GM12878 (cell line): ENCODE measurements at regions of chr15 and their contacts with region 1.

Region 1: GRCh38 chr15:74906446-74907162 is at the start of gene FAM219B:
- DNase-seq: peak; percentile 47
- ATAC-seq: peak; percentile 98
- H3K4me3 ChIP-seq: peak within 1 kb of the TSS; percentile 97
- H3K27ac ChIP-seq: peak within 1 kb of the TSS; percentile 76
- H3K4me1 ChIP-seq: peaks cover 6% of the 10 kb centered on the region
- H3K27me3 ChIP-seq: no peaks in the 10 kb centered on the region
- CTCF ChIP-seq: 0 out of 6 replicates have a peak, but pooled peaks of 1 of the 3 experiments have one; percentile 1
- EP300 ChIP-seq: no peak
- POLR2A ChIP-seq: peak; percentile 82
- RAD21 ChIP-seq: no peak
- polyA plus RNA-seq, gene FAM219B: 7.6 to 8.9 TPM

Region 2: DNA sequence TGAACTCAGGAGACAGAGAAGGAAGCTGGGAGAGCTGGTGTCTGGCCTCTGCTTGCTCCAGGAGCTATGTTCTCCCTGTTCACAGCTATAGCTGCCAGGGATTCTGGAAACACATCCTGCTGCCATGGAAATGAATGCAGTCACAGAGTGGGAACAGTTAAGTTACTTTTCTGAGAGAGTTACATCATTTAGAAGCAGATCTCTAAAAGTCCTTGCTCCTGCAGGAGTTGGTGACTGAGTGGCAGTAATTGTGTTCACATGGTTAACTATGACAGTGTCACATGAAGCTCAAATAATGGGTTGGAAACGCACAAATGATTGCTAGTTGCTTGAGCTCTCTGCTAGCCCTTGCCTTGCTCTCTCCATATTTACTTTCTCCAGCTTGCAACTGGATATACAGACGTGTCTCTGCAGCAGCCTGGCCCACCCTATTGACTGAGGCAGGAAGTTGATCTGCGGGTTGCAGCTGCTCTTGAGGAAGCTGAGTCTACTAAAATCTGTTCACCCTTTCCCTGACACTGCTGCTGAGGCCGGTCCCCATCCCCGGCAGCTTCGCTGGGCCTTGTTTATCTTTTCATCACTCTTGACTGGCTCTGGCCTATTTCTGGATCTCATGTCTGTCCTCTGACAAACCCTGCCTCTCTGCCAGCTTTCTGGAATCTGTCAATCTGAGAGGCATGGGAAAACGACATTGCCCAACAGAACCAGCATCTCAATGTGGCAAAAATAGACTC is 749.8 kb before region 1 on chr15:
- CTCF ChIA-PET with region 1: no interaction called
- POLR2A ChIA-PET with region 1: no interaction called
- RAD21 ChIA-PET with region 1: no interaction called
- SMC1A ChIA-PET with region 1: no interaction called
- in situ Hi-C with region 1: no loop called
- intact Hi-C with region 1: no loop called
- DNase-seq: no peak
- ATAC-seq: no peak
- H3K4me3 ChIP-seq: no peak overlapping the region
- H3K27ac ChIP-seq: peak overlapping the region; percentile 37; the same call in 1 of the 2 replicates
- H3K4me1 ChIP-seq: peaks cover 33% of the 10 kb centered on the region
- H3K27me3 ChIP-seq: no peaks in the 10 kb centered on the region
- CTCF ChIP-seq: no peak
- EP300 ChIP-seq: no peak
- POLR2A ChIP-seq: no peak
- RAD21 ChIP-seq: no peak

Region 3: GRCh38 chr15:74768771-74769342 is 137.7 kb before region 1 on chr15:
- CTCF ChIA-PET with region 1: interaction called, 119 read pairs
- POLR2A ChIA-PET with region 1: interaction called, 7 read pairs
- RAD21 ChIA-PET with region 1: interaction called, 46 read pairs
- SMC1A ChIA-PET with region 1: interaction called, 50 read pairs
- in situ Hi-C with region 1: no loop called
- intact Hi-C with region 1: loop called (anchors 5 kb)
- DNase-seq: no peak
- ATAC-seq: peak; percentile 58
- H3K4me3 ChIP-seq: no peak overlapping the region
- H3K27ac ChIP-seq: no peak overlapping the region
- H3K4me1 ChIP-seq: peaks cover 12% of the 10 kb centered on the region
- H3K27me3 ChIP-seq: no peaks in the 10 kb centered on the region
- CTCF ChIP-seq: peak; percentile 76 to 84 (median 76)
- EP300 ChIP-seq: no peak
- POLR2A ChIP-seq: no peak
- RAD21 ChIP-seq: peak; percentile 91

Region 4: GRCh38 chr15:74793135-74794028 is 113.2 kb before region 1 on chr15:
- CTCF ChIA-PET with region 1: interaction called, 23 read pairs
- POLR2A ChIA-PET with region 1: interaction called, 5 read pairs
- RAD21 ChIA-PET with region 1: interaction called, 7 read pairs
- SMC1A ChIA-PET with region 1: interaction called, 15 read pairs
- in situ Hi-C with region 1: no loop called
- intact Hi-C with region 1: no loop called
- DNase-seq: no peak
- ATAC-seq: peak; percentile 23
- H3K4me3 ChIP-seq: peak overlapping the region; percentile 77
- H3K27ac ChIP-seq: peak overlapping the region; percentile 96
- H3K4me1 ChIP-seq: peaks cover 64% of the 10 kb centered on the region
- H3K27me3 ChIP-seq: no peaks in the 10 kb centered on the region
- CTCF ChIP-seq: peak; percentile 63 to 68 (median 64)
- EP300 ChIP-seq: no peak
- POLR2A ChIP-seq: peak; percentile 33
- RAD21 ChIP-seq: peak; percentile 64

Region 5: DNA sequence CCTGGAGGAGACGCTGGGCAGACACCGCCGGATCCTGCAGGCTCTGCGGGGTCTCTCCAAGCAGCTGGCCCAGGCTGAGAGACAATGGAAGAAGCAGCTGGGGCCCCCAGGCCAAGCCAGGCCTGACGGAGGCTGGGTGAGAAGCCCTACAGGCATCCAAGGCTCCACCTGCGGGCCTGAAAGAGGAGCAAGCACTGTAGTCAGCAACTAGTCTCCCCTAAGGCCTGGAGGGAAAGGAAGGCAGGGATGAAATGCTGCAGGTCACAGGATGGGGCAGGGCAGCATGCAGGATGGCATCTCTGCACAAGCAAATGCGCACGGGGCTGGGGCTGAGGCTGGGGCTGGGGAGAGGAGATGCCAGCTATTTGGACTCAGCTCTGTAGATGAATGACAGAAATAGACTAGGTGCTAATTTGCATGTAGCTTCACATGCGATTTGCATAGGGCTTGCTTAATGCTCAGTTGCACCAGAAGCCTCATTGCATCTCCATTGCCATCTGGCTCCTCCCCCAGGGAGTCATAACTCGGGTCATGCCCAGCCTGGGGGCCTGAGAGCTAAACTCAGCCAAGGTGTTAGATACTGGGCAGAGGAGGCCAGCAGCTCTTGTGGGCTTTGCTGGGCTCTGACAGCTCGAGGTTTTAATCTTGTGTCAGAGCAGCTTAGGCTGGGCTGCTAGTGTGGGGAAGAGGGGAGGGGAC is 85.4 kb before region 1 on chr15:
- CTCF ChIA-PET with region 1: interaction called, 12 read pairs
- POLR2A ChIA-PET with region 1: no interaction called
- RAD21 ChIA-PET with region 1: no interaction called
- SMC1A ChIA-PET with region 1: no interaction called
- in situ Hi-C with region 1: no loop called
- intact Hi-C with region 1: no loop called
- DNase-seq: peak; percentile 45
- ATAC-seq: peak; percentile 87
- H3K4me3 ChIP-seq: no peak overlapping the region
- H3K27ac ChIP-seq: no peak overlapping the region
- H3K4me1 ChIP-seq: peaks cover 16% of the 10 kb centered on the region
- H3K27me3 ChIP-seq: peaks cover 0 to 5% of the 10 kb centered on the region in 2 experiments; a peak in 2 of 4 replicates
- CTCF ChIP-seq: no peak
- EP300 ChIP-seq: no peak
- POLR2A ChIP-seq: no peak
- RAD21 ChIP-seq: no peak

Region 6: GRCh38 chr15:74857082-74857655 is 49.4 kb before region 1 on chr15:
- CTCF ChIA-PET with region 1: interaction called, 76 read pairs
- POLR2A ChIA-PET with region 1: interaction called, 6 read pairs
- RAD21 ChIA-PET with region 1: interaction called, 53 read pairs
- SMC1A ChIA-PET with region 1: interaction called, 36 read pairs
- in situ Hi-C with region 1: no loop called
- intact Hi-C with region 1: loop called (anchors 5 kb)
- DNase-seq: peak; percentile 78
- ATAC-seq: peak; percentile 91
- H3K4me3 ChIP-seq: peak overlapping the region; percentile 35; the same call in 1 of the 2 replicates
- H3K27ac ChIP-seq: peak overlapping the region; percentile 80
- H3K4me1 ChIP-seq: peaks cover 46% of the 10 kb centered on the region
- H3K27me3 ChIP-seq: no peaks in the 10 kb centered on the region
- CTCF ChIP-seq: no peak
- EP300 ChIP-seq: no peak
- POLR2A ChIP-seq: peak; percentile 35
- RAD21 ChIP-seq: no peak

Region 7: GRCh38 chr15:74884428-74885223 is 22.0 kb before region 1 on chr15:
- CTCF ChIA-PET with region 1: interaction called, 75 read pairs
- POLR2A ChIA-PET with region 1: interaction called, 4 read pairs
- RAD21 ChIA-PET with region 1: interaction called, 17 read pairs
- SMC1A ChIA-PET with region 1: interaction called, 31 read pairs
- in situ Hi-C with region 1: no loop called
- intact Hi-C with region 1: no loop called
- DNase-seq: no peak
- ATAC-seq: no peak
- H3K4me3 ChIP-seq: no peak overlapping the region
- H3K27ac ChIP-seq: no peak overlapping the region
- H3K4me1 ChIP-seq: peaks cover 17% of the 10 kb centered on the region
- H3K27me3 ChIP-seq: no peaks in the 10 kb centered on the region
- CTCF ChIP-seq: no peak
- EP300 ChIP-seq: no peak
- POLR2A ChIP-seq: no peak
- RAD21 ChIP-seq: no peak

Region 8: DNA sequence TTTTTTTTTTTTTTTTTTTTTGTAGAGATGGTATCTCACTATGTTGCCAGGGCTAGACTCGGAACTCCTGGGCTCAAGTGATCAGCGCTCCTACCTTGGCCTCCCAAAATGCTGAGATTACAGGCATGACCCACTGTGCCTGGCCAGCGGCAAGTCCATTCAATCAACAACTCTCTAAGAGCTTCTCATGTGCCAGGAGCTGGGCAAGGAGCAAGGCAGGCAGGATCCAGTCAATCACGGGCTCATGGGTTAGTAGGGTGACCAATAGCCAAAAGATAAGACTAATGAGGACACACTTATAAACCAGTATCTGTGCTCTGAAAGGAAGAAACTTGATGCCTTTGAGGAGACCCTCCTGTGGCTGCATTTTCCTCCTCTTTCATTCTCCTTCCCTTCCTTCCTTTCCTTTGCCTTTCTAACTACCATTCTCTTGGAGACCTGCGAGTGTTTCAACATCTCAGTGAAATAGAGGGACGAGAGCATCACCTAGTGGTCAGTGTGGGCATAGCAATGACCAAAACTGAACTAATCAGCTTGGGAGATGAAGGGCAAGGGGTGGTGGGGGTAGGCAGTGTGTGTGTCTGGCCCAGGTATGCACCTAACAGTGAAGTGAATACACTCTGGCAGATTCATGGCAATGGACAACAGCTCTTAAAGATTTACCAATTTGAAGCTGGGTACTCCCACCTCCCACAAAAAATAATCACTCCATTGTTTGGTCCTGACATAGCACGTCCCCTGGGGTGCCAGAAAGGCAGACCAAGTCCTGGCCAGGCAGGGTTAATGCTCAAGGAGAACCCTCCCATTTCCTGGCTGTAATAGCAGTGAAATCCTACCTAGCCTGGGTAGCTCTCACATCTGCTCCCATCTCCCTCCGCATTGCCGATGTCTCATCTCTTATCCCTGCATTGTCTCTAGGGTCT is 43.7 kb after region 1 on chr15:
- CTCF ChIA-PET with region 1: interaction called, 32 read pairs
- POLR2A ChIA-PET with region 1: no interaction called
- RAD21 ChIA-PET with region 1: interaction called, 11 read pairs
- SMC1A ChIA-PET with region 1: interaction called, 19 read pairs
- in situ Hi-C with region 1: no loop called
- intact Hi-C with region 1: no loop called
- DNase-seq: peak; percentile 53
- ATAC-seq: peak; percentile 93
- H3K4me3 ChIP-seq: no peak overlapping the region
- H3K27ac ChIP-seq: no peak overlapping the region
- H3K4me1 ChIP-seq: no peaks in the 10 kb centered on the region; the same call in none of the 2 replicates
- H3K27me3 ChIP-seq: no peaks in the 10 kb centered on the region
- CTCF ChIP-seq: peak; percentile 99 to 100 (median 99); a peak in 5 of 6 replicates
- EP300 ChIP-seq: no peak
- POLR2A ChIP-seq: no peak
- RAD21 ChIP-seq: peak; percentile 99

Region 9: GRCh38 chr15:75349851-75350588 is 443.4 kb after region 1 on chr15:
- CTCF ChIA-PET with region 1: no interaction called
- POLR2A ChIA-PET with region 1: no interaction called
- RAD21 ChIA-PET with region 1: no interaction called
- SMC1A ChIA-PET with region 1: no interaction called
- in situ Hi-C with region 1: no loop called
- intact Hi-C with region 1: no loop called
- DNase-seq: peak; percentile 73
- ATAC-seq: peak; percentile 81
- H3K4me3 ChIP-seq: no peak overlapping the region
- H3K27ac ChIP-seq: peak overlapping the region; percentile 20; the same call in 1 of the 2 replicates
- H3K4me1 ChIP-seq: peaks cover 23% of the 10 kb centered on the region
- H3K27me3 ChIP-seq: peaks cover 4 to 11% of the 10 kb centered on the region in 2 experiments
- CTCF ChIP-seq: no peak
- EP300 ChIP-seq: no peak
- POLR2A ChIP-seq: peak; percentile 52
- RAD21 ChIP-seq: no peak